ENCODE measurements at regions of chr5 and their contacts with region 1.

Region 1: GRCh38 chr5:80275347-80275746 is 19.5 kb upstream of the SERINC5 start:
- DNase-seq: peak; percentile 39 to 40
- H3K4me3 ChIP-seq: no peak overlapping the region
- H3K4me1 ChIP-seq: no peaks in the 10 kb centered on the region
- H3K27me3 ChIP-seq: no peaks in the 10 kb centered on the region

Region 2: GRCh38 chr5:79878721-79879336 is 396.5 kb before region 1 on chr5:
- in situ Hi-C with region 1: loop called (anchors 25 kb)
- DNase-seq: peak in 1 of 2 experiments; percentile 64
- H3K4me3 ChIP-seq: no peak overlapping the region
- H3K4me1 ChIP-seq: no peaks in the 10 kb centered on the region
- H3K27me3 ChIP-seq: no peaks in the 10 kb centered on the region

Measured in HAP-1 (cell line).